ENCODE measurements at regions of chr9 and their contacts with region 1.

Region 1: DNA sequence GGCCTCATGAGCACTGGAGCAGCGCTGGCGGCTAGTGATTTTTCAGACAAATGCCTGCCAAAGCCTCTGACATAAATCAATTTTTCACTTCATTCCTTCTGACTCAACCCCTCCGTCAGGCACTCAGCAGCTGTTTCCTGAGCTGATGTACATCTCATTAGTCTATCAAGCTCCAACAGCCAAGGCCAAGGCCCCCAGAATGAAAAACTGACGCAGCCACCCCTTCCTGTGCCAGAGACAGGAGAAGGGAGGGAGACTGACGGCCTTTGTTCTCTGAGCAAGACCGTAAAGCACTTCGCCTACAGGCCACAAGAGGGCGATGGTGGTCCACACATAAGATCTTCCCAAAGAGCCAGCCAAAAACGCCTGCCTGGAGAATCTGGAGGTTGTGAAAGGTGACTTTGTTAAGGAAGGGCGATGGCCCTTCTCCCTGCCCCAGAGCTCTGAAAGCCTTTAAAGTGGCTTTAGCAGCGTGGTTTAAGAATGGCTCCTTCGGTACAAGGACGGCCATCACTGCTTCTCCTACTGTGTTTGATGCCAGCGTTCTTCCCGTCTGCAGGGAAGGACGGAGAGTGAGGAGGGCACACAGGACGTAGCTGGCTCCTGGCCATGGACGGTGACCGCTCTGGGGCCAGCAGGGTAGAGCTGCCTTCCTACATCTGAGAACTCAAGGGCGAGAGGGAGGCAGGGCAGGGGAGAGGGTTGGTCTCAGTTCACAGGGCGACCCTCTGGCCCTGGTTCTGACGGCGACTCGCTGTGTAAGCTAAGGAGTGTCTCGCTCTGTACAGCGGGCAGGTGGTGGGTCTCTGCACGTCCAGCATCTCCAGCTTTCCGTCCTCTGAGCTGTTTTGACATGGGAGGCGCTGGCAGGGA is 37.0 kb downstream of the ALG2 start:
- DNase-seq: peak; percentile 80
- ATAC-seq: peak; percentile 79
- H3K4me3 ChIP-seq: no peak overlapping the region
- H3K27ac ChIP-seq: peak overlapping the region; percentile 49
- H3K4me1 ChIP-seq: peaks cover 66% of the 10 kb centered on the region
- H3K27me3 ChIP-seq: no peaks in the 10 kb centered on the region
- CTCF ChIP-seq: peak; percentile 90 to 98 (median 94)
- EP300 ChIP-seq: no peak; a peak in 1 of 4 replicates
- POLR2A ChIP-seq: 0 out of 2 replicates have a peak, but pooled peaks have one; percentile 18
- RAD21 ChIP-seq: peak; percentile 93

Region 2: GRCh38 chr9:99130069-99130468 is 54.6 kb before region 1 on chr9:
- CTCF ChIA-PET with region 1: no interaction called
- POLR2A ChIA-PET with region 1: no interaction called
- RAD21 ChIA-PET with region 1: no interaction called
- SMC1A ChIA-PET with region 1: interaction called, 3 read pairs
- in situ Hi-C with region 1: loop called (anchors 5 kb)
- intact Hi-C with region 1: no loop called
- DNase-seq: peak; percentile 72
- ATAC-seq: peak; percentile 87
- H3K4me3 ChIP-seq: no peak overlapping the region
- H3K27ac ChIP-seq: peak overlapping the region; percentile 22
- H3K4me1 ChIP-seq: peaks cover 38% of the 10 kb centered on the region
- H3K27me3 ChIP-seq: no peaks in the 10 kb centered on the region
- CTCF ChIP-seq: no peak
- EP300 ChIP-seq: peak; percentile 81 to 95
- POLR2A ChIP-seq: no peak
- RAD21 ChIP-seq: 0 out of 2 replicates have a peak, but pooled peaks have one; percentile 2

Region 3: GRCh38 chr9:99213197-99213596 is 28.5 kb after region 1 on chr9:
- CTCF ChIA-PET with region 1: interaction called, 14 read pairs
- POLR2A ChIA-PET with region 1: no interaction called
- RAD21 ChIA-PET with region 1: interaction called, 121 read pairs
- SMC1A ChIA-PET with region 1: interaction called, 189 read pairs
- in situ Hi-C with region 1: no loop called
- intact Hi-C with region 1: no loop called
- DNase-seq: no peak
- ATAC-seq: no peak
- H3K4me3 ChIP-seq: no peak overlapping the region
- H3K27ac ChIP-seq: no peak overlapping the region
- H3K4me1 ChIP-seq: no peaks in the 10 kb centered on the region
- H3K27me3 ChIP-seq: no peaks in the 10 kb centered on the region
- CTCF ChIP-seq: no peak
- EP300 ChIP-seq: no peak
- POLR2A ChIP-seq: no peak
- RAD21 ChIP-seq: no peak

Region 4: GRCh38 chr9:99259231-99259918 is 74.7 kb after region 1 on chr9:
- CTCF ChIA-PET with region 1: interaction called, 69 read pairs
- POLR2A ChIA-PET with region 1: interaction called, 3 read pairs
- RAD21 ChIA-PET with region 1: interaction called, 6 read pairs
- SMC1A ChIA-PET with region 1: interaction called, 29 read pairs
- in situ Hi-C with region 1: no loop called
- intact Hi-C with region 1: loop called (anchors 5 kb)
- DNase-seq: no peak
- ATAC-seq: no peak
- H3K4me3 ChIP-seq: no peak overlapping the region
- H3K27ac ChIP-seq: peak overlapping the region; percentile 45
- H3K4me1 ChIP-seq: peaks cover 30% of the 10 kb centered on the region
- H3K27me3 ChIP-seq: no peaks in the 10 kb centered on the region
- CTCF ChIP-seq: no peak
- EP300 ChIP-seq: no peak
- POLR2A ChIP-seq: peak; percentile 85
- RAD21 ChIP-seq: no peak

Region 5: DNA sequence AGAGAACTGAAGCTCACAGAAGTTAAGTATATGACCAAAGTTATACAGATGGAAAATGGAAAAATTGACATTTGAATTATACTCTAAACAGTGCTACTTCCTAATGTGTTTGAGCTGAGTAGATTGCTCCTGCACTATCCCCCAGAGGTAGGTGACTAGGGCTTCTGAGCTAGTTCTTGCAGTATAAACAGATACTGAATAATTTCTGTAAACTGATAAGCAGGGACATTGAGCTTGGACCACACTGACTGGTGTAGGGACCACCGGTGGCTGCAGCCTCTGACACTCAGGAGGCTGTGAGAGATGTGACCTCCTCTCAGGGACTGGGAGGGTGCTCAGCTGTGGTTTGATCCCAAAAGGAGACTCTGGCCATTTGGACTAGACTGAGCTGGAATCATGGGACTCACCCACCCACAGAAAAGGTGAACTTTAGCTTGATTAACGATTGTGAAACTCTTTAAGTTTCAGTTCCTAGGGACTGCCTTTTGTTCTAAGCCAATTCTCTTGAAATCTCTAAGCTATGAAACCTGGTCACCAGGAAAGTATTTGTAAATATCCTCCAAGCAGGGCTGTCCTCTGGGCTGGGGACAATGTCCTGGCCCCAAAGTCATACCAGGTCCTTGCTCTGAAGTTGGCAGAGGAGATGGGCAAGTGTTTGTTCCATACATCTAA is 328.9 kb after region 1 on chr9:
- CTCF ChIA-PET with region 1: interaction called, 5 read pairs
- POLR2A ChIA-PET with region 1: no interaction called
- RAD21 ChIA-PET with region 1: interaction called, 4 read pairs
- SMC1A ChIA-PET with region 1: interaction called, 10 read pairs
- in situ Hi-C with region 1: no loop called
- intact Hi-C with region 1: loop called (anchors 5 kb)
- DNase-seq: peak; percentile 59
- ATAC-seq: peak; percentile 88
- H3K4me3 ChIP-seq: no peak overlapping the region
- H3K27ac ChIP-seq: peak overlapping the region; percentile 42; the same call in 1 of the 2 replicates
- H3K4me1 ChIP-seq: peaks cover 34% of the 10 kb centered on the region
- H3K27me3 ChIP-seq: no peaks in the 10 kb centered on the region
- CTCF ChIP-seq: no peak
- EP300 ChIP-seq: peak; percentile 85 to 95
- POLR2A ChIP-seq: no peak
- RAD21 ChIP-seq: no peak

Region 6: GRCh38 chr9:99878651-99879050 is 693.9 kb after region 1 on chr9:
- CTCF ChIA-PET with region 1: no interaction called
- POLR2A ChIA-PET with region 1: no interaction called
- RAD21 ChIA-PET with region 1: no interaction called
- SMC1A ChIA-PET with region 1: no interaction called
- in situ Hi-C with region 1: no loop called
- intact Hi-C with region 1: no loop called
- DNase-seq: no peak
- ATAC-seq: no peak
- H3K4me3 ChIP-seq: no peak overlapping the region
- H3K27ac ChIP-seq: no peak overlapping the region
- H3K4me1 ChIP-seq: no peaks in the 10 kb centered on the region
- H3K27me3 ChIP-seq: no peaks in the 10 kb centered on the region
- CTCF ChIP-seq: no peak
- EP300 ChIP-seq: no peak
- POLR2A ChIP-seq: no peak
- RAD21 ChIP-seq: no peak

Region 7: DNA sequence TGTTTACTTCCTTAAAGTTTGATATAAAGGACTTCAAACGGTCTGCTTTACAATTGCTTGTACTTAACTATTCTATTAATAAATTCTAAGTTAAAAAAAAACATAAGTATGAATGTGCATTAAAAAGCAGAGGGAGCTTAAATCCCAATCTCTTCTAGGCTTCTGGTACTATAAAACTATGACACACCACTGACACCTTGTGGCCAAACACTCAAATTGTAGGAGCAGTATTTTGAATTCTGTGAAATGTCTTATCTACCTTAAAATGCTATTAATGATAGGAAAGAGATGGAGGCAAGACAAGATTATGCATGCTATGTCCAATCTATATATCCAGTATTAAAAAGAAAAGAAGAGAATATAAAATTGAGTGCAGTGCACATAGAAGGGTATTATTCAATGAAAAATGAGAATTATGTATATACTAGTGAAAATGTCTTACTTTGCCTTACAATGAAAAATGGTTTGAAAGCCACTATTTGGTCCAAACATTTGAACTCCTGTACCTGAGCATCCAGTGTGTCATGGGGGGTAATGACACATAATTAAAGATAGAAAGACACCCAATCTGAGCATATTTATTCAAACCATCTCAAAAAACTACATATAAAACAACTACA is 826.5 kb after region 1 on chr9:
- CTCF ChIA-PET with region 1: interaction called, 8 read pairs
- POLR2A ChIA-PET with region 1: no interaction called
- RAD21 ChIA-PET with region 1: interaction called, 5 read pairs
- SMC1A ChIA-PET with region 1: interaction called, 3 read pairs
- in situ Hi-C with region 1: loop called (anchors 5 kb)
- intact Hi-C with region 1: loop called (anchors 5 kb)
- DNase-seq: peak; percentile 38
- ATAC-seq: peak; percentile 73
- H3K4me3 ChIP-seq: no peak overlapping the region
- H3K27ac ChIP-seq: no peak overlapping the region
- H3K4me1 ChIP-seq: no peaks in the 10 kb centered on the region
- H3K27me3 ChIP-seq: no peaks in the 10 kb centered on the region
- CTCF ChIP-seq: peak; percentile 48 to 58 (median 56)
- EP300 ChIP-seq: no peak
- POLR2A ChIP-seq: no peak
- RAD21 ChIP-seq: peak; percentile 76

Region 8: GRCh38 chr9:100322954-100323536 is 1138.3 kb after region 1 on chr9:
- CTCF ChIA-PET with region 1: interaction called, 5 read pairs
- POLR2A ChIA-PET with region 1: no interaction called
- RAD21 ChIA-PET with region 1: interaction called, 3 read pairs
- SMC1A ChIA-PET with region 1: interaction called, 7 read pairs
- in situ Hi-C with region 1: loop called (anchors 10 kb)
- intact Hi-C with region 1: no loop called
- DNase-seq: no peak
- ATAC-seq: peak; percentile 69
- H3K4me3 ChIP-seq: no peak overlapping the region
- H3K27ac ChIP-seq: no peak overlapping the region
- H3K4me1 ChIP-seq: no peaks in the 10 kb centered on the region
- H3K27me3 ChIP-seq: no peaks in the 10 kb centered on the region
- CTCF ChIP-seq: peak; percentile 55 to 74 (median 65)
- EP300 ChIP-seq: no peak
- POLR2A ChIP-seq: no peak
- RAD21 ChIP-seq: peak; percentile 65

Measured in GM12878 (cell line).